HEK293 (cell line): ENCODE measurements at regions of chr20 and their contacts with region 1.

Region 1: GRCh38 chr20:59455402-59456341 is 148.7 kb upstream of the PHACTR3 start:
- H3K4me3 ChIP-seq: no peak overlapping the region
- H3K27ac ChIP-seq: no peak overlapping the region
- H3K4me1 ChIP-seq: no peaks in the 10 kb centered on the region
- CTCF ChIP-seq: no peak

Region 2: GRCh38 chr20:58481481-58482021 is 974.1 kb before region 1 on chr20:
- CTCF ChIA-PET with region 1: interaction called, 13 read pairs
- POLR2A ChIA-PET with region 1: no interaction called
- H3K4me3 ChIP-seq: no peak overlapping the region
- H3K27ac ChIP-seq: no peak overlapping the region
- H3K4me1 ChIP-seq: no peaks in the 10 kb centered on the region
- CTCF ChIP-seq: no peak

Region 3: DNA sequence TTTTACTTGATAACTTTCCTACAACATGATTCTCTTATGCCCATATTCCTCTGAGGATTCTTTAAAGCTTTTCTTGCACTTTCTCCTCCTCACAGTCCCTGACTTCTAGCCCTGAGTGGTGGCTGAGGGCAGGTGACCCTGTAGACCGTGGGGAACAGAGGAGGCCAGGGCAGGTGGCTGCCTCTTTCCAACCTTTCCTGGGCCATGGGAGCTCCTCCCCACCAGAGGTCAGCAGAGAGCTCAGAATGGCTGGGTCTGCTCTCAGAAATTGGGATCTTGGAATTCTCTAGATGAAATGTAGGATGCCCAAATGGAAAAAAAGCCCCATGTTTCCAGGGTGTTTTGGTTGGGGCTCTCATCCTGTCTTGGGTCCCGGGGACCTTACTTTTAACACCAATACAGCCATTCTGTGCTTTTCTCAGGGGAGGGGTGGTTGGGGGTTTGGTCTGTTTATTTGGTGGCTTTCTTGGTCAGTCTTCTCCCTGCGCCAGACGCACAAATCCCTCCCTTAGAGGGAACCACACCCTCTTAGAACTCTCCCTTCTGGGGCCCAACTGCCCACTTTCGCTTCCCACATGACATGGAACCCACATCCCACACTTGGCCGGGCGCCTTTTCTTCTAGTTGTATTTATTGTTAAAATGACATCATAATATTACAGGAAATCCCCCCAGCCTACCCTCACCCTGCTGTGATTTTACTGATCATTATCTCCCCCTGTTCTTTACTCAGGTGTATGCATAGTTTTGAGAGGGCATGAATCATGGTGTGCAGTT is 585.2 kb before region 1 on chr20:
- CTCF ChIA-PET with region 1: interaction called, 12 read pairs
- POLR2A ChIA-PET with region 1: no interaction called
- H3K4me3 ChIP-seq: no peak overlapping the region
- H3K27ac ChIP-seq: no peak overlapping the region
- H3K4me1 ChIP-seq: no peaks in the 10 kb centered on the region
- CTCF ChIP-seq: peak; percentile 40; the same call in 1 of the 2 replicates

Region 4: GRCh38 chr20:59385480-59385879 is 70.2 kb before region 1 on chr20:
- CTCF ChIA-PET with region 1: no interaction called
- POLR2A ChIA-PET with region 1: no interaction called
- H3K4me3 ChIP-seq: no peak overlapping the region
- H3K27ac ChIP-seq: no peak overlapping the region
- H3K4me1 ChIP-seq: no peaks in the 10 kb centered on the region
- CTCF ChIP-seq: no peak

Region 5: GRCh38 chr20:59403261-59403961 is 52.3 kb before region 1 on chr20:
- CTCF ChIA-PET with region 1: interaction called, 15 read pairs
- POLR2A ChIA-PET with region 1: no interaction called
- H3K4me3 ChIP-seq: peak overlapping the region; percentile 6; the same call in 1 of the 2 replicates
- H3K27ac ChIP-seq: no peak overlapping the region
- H3K4me1 ChIP-seq: no peaks in the 10 kb centered on the region; the same call in 1 of the 2 replicates
- CTCF ChIP-seq: peak; percentile 91

Region 6: GRCh38 chr20:59441860-59442845 is 13.5 kb before region 1 on chr20:
- CTCF ChIA-PET with region 1: interaction called, 10 read pairs
- POLR2A ChIA-PET with region 1: no interaction called
- H3K4me3 ChIP-seq: no peak overlapping the region
- H3K27ac ChIP-seq: no peak overlapping the region
- H3K4me1 ChIP-seq: no peaks in the 10 kb centered on the region
- CTCF ChIP-seq: no peak

Region 7: GRCh38 chr20:59598625-59599310 is 143.1 kb after region 1 on chr20:
- CTCF ChIA-PET with region 1: no interaction called
- POLR2A ChIA-PET with region 1: no interaction called
- H3K4me3 ChIP-seq: no peak overlapping the region
- H3K27ac ChIP-seq: no peak overlapping the region
- H3K4me1 ChIP-seq: no peaks in the 10 kb centered on the region
- CTCF ChIP-seq: peak; percentile 63